K562 (cell line): ENCODE measurements at regions of chr10 and their contacts with region 1.

Region 1: GRCh38 chr10:31928549-31929260 is at the start of gene ARHGAP12:
- DNase-seq: peak; percentile 86 to 91 (median 88)
- ATAC-seq: peak; percentile 90
- H3K4me3 ChIP-seq: peak within 1 kb of the TSS; percentile 82
- H3K27ac ChIP-seq: peak within 1 kb of the TSS; percentile 85
- H3K4me1 ChIP-seq: peaks cover 11 to 21% of the 10 kb centered on the region in 2 experiments; a peak in 4 of 5 replicates
- H3K27me3 ChIP-seq: no peaks in the 10 kb centered on the region
- CTCF ChIP-seq: 0 out of 6 replicates have a peak, but pooled peaks of 1 of the 3 experiments have one; percentile 1
- EP300 ChIP-seq: no peak
- POLR2A ChIP-seq: peak; percentile 73
- RAD21 ChIP-seq: no peak
- polyA plus RNA-seq, gene ARHGAP12: 4.4 to 5.0 TPM

Region 2: GRCh38 chr10:31864834-31865518 is 63.7 kb before region 1 on chr10:
- CTCF ChIA-PET with region 1: interaction called, 3 read pairs
- POLR2A ChIA-PET with region 1: no interaction called
- in situ Hi-C with region 1: no loop called
- intact Hi-C with region 1: loop called (anchors 1 kb)
- DNase-seq: no peak
- ATAC-seq: no peak
- H3K4me3 ChIP-seq: no peak overlapping the region
- H3K27ac ChIP-seq: no peak overlapping the region
- H3K4me1 ChIP-seq: peaks cover 0 to 5% of the 10 kb centered on the region in 2 experiments; a peak in 2 of 5 replicates
- H3K27me3 ChIP-seq: no peaks in the 10 kb centered on the region
- CTCF ChIP-seq: no peak
- EP300 ChIP-seq: no peak
- POLR2A ChIP-seq: no peak
- RAD21 ChIP-seq: no peak

Region 3: GRCh38 chr10:31912898-31913852 is 15.5 kb before region 1 on chr10:
- CTCF ChIA-PET with region 1: no interaction called
- POLR2A ChIA-PET with region 1: interaction called, 11 read pairs
- in situ Hi-C with region 1: no loop called
- intact Hi-C with region 1: no loop called
- DNase-seq: no peak
- ATAC-seq: peak; percentile 27; the same call in 2 of the 3 replicates
- H3K4me3 ChIP-seq: no peak overlapping the region
- H3K27ac ChIP-seq: no peak overlapping the region
- H3K4me1 ChIP-seq: peaks cover 6 to 16% of the 10 kb centered on the region in 2 experiments; a peak in 4 of 5 replicates
- H3K27me3 ChIP-seq: no peaks in the 10 kb centered on the region
- CTCF ChIP-seq: no peak
- EP300 ChIP-seq: no peak
- POLR2A ChIP-seq: no peak
- RAD21 ChIP-seq: no peak

Region 4: DNA sequence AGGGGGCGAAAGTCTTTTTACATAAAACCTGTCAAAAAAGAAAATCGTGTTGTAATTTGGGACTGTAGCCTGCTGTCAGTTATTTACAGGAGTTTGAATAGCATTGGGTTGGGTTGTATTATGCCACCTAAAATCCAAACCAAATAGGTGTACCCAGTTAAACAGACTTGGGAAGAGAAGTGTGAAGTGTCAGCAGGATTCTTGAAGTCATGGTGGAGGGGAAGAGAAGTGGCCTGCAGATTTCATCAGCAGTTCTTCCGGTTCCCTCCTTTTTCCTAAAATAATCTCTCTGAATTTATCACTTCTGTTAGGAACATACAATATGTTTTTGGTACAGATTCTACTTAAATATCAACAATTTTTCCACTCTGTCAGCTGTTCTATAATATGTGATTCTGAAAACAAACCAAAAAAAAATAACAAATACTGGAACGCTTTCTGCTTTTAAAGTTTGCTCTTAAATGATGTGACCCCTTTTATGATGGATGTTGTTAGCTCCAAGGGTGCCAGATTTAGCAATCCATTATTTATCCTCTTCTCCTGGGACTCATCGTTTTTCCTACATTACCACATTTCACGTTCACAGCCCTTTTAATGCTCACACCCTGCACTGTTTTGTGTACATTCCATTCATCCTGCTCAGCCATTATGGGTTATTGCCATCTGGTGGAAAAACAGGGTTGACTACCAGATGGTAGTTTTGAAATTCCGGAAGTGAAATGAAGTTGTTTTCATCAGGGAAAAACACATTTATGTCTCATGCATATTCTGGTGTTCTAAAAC is 18.6 kb after region 1 on chr10:
- CTCF ChIA-PET with region 1: interaction called, 4 read pairs
- POLR2A ChIA-PET with region 1: interaction called, 14 read pairs
- in situ Hi-C with region 1: no loop called
- intact Hi-C with region 1: no loop called
- DNase-seq: peak in 2 of 4 experiments; percentile 46 to 71
- ATAC-seq: peak; percentile 81
- H3K4me3 ChIP-seq: no peak overlapping the region
- H3K27ac ChIP-seq: peak overlapping the region; percentile 53
- H3K4me1 ChIP-seq: peaks cover 9 to 32% of the 10 kb centered on the region in 2 experiments; a peak in 4 of 5 replicates
- H3K27me3 ChIP-seq: no peaks in the 10 kb centered on the region
- CTCF ChIP-seq: peak; percentile 50 to 69 (median 58); a peak in 5 of 6 replicates
- EP300 ChIP-seq: peak; percentile 6; the same call in 1 of the 2 replicates
- POLR2A ChIP-seq: no peak
- RAD21 ChIP-seq: peak; percentile 77 to 91

Region 5: DNA sequence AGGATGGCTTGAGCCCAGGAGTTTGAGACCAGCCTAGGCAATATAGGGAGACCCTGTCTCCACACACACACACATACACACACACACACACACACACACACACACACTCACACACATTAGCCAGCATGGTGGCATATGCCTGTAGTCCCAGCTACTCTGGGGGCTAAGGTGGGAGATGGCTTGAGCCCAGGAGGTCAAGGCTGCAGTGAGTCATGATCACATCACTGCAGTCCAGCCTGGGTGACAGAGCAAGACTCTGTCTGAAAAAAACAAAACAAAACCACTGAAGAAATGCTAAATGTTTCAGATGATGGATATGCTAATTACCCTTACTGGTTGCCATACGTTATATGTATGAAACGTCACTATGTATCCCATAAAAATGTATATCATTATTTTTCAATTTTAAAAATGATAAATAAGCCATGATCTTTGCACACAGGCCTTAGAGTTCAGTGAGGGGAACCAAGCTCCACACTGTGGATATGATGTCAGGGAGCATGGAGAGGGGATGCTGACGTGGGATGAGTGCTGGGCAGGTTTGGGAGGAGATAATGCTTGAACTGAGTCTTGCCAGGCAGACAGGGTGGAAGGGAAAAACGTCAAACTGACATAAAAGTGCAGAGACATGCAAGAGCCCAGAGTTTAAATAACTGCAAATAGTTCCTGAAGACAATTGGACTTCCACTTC is 45.9 kb after region 1 on chr10:
- CTCF ChIA-PET with region 1: no interaction called
- POLR2A ChIA-PET with region 1: interaction called, 3 read pairs
- in situ Hi-C with region 1: no loop called
- intact Hi-C with region 1: loop called (anchors 2 kb)
- DNase-seq: peak in 1 of 4 experiments; percentile 47
- ATAC-seq: no peak
- H3K4me3 ChIP-seq: no peak overlapping the region
- H3K27ac ChIP-seq: peak overlapping the region; percentile 35; the same call in 1 of the 3 replicates
- H3K4me1 ChIP-seq: peaks cover 38 to 47% of the 10 kb centered on the region in 2 experiments
- H3K27me3 ChIP-seq: no peaks in the 10 kb centered on the region
- CTCF ChIP-seq: no peak
- EP300 ChIP-seq: no peak
- POLR2A ChIP-seq: no peak
- RAD21 ChIP-seq: no peak

Region 6: DNA sequence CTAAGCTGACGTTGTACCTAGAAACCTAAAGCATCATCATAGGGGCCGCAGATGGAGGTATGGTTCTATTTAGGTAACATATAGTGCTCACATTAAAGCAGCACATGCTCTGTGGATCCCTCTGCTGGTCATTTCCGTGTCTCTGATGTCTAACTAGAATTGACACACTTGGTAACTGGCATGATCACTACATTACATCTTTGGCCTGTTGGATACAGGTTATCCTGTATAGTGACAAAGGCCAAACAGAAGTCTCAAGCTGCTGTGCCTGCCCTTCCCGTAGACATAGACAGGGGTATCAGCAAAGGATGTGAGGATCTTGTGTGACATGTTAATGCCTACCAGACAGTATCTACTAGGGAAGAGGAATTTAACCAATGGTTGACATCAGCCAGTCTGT is 76.3 kb after region 1 on chr10:
- CTCF ChIA-PET with region 1: interaction called, 4 read pairs
- POLR2A ChIA-PET with region 1: interaction called, 6 read pairs
- in situ Hi-C with region 1: no loop called
- intact Hi-C with region 1: loop called (anchors 10 kb)
- DNase-seq: peak; percentile 32 to 78 (median 42)
- ATAC-seq: peak; percentile 91
- H3K4me3 ChIP-seq: no peak overlapping the region
- H3K27ac ChIP-seq: no peak overlapping the region
- H3K4me1 ChIP-seq: peaks cover 0 to 5% of the 10 kb centered on the region in 2 experiments; a peak in 2 of 5 replicates
- H3K27me3 ChIP-seq: no peaks in the 10 kb centered on the region
- CTCF ChIP-seq: peak; percentile 62 to 79 (median 74)
- EP300 ChIP-seq: no peak
- POLR2A ChIP-seq: 0 out of 2 replicates have a peak, but pooled peaks have one; percentile 20
- RAD21 ChIP-seq: peak; percentile 56 to 84